ENCODE measurements at regions of chr3 and their contacts with region 1.

Region 1: DNA sequence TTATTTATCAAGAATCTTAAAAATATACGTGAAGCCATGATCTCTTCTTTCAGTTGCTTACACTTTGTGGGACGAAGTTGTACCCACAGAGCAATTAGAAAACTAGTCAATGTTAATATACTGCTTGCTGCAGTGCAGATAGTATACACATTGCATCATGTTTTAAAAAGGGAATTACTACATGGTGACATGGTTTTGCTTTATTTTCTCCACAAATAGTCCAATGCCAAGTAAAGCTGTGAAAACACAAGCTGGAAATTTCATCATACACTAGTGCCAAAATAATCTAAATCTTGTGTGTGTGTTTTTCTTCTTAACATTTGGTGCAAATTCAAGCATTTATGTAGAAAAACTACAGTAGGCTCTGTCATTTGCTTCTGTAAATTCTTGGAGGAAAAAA is 233.0 kb downstream of the EPHA3 start:
- DNase-seq: no peak
- H3K4me3 ChIP-seq: no peak overlapping the region
- H3K27ac ChIP-seq: no peak overlapping the region
- H3K4me1 ChIP-seq: no peaks in the 10 kb centered on the region
- H3K27me3 ChIP-seq: no peaks in the 10 kb centered on the region
- CTCF ChIP-seq: no peak

Region 2: GRCh38 chr3:88239870-88240269 is 1100.5 kb before region 1 on chr3:
- intact Hi-C with region 1: no loop called
- DNase-seq: no peak
- H3K4me3 ChIP-seq: no peak overlapping the region
- H3K27ac ChIP-seq: no peak overlapping the region
- H3K4me1 ChIP-seq: no peaks in the 10 kb centered on the region
- H3K27me3 ChIP-seq: no peaks in the 10 kb centered on the region
- CTCF ChIP-seq: no peak

Region 3: DNA sequence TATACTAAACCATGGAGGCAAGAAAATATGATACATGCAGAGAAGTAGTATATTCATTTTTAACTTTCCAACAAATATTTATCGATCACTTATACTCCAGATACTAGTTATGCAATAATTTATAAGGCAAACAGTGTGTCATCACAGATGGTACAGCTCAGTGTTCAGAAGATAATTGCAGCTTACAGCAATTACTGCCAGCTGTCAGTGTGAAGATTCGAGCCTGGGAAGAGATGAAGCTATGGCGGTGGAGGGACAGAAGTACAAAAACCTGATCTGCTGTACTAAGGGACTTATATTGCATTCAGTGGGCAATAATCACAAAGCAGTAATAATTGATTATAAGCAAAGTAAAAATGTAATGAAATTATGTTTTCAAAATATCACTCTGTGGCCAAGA is 403.6 kb before region 1 on chr3:
- intact Hi-C with region 1: no loop called
- DNase-seq: no peak
- H3K4me3 ChIP-seq: no peak overlapping the region
- H3K27ac ChIP-seq: no peak overlapping the region
- H3K4me1 ChIP-seq: no peaks in the 10 kb centered on the region
- H3K27me3 ChIP-seq: no peaks in the 10 kb centered on the region
- CTCF ChIP-seq: no peak

Region 4: DNA sequence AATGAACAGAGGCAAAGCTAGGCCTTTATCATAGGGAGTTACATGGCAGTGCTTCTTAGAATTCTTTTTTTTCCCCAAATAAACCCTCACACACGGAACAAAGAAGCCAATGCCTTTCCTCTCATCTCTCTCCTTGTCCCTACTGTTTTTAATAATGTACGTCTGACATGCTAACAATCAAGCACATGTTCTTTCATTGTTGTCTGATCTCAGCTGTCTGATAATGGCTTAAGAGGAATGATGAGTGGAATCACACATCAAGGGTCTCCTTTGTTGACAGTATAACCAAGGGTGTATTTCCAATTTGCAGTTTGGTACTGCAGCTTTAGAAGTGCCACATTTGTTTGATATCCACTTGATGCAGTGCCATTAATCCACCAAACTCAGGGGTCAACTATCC is 267.8 kb before region 1 on chr3:
- intact Hi-C with region 1: no loop called
- DNase-seq: no peak
- H3K4me3 ChIP-seq: no peak overlapping the region
- H3K27ac ChIP-seq: no peak overlapping the region
- H3K4me1 ChIP-seq: no peaks in the 10 kb centered on the region
- H3K27me3 ChIP-seq: no peaks in the 10 kb centered on the region
- CTCF ChIP-seq: no peak

Region 5: DNA sequence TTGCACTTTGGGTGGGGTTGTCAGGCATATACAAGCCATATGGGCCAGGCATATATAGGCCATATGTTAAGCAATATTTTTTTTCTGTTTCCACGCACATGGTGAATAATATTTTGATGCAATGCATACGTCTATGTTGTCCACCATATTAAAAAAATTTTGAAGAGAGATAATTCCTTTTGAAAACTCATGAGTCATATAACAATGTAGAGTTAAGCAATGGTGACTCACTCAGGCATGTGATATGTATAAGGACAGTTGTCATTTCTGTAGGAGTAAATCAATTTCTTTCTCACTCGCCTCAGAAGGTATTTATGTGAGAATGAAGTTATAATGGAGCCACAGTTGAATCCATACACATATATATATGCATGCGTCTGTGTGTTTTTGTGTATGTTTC is 39.6 kb after region 1 on chr3:
- intact Hi-C with region 1: loop called (anchors 5 kb)
- DNase-seq: no peak
- H3K4me3 ChIP-seq: no peak overlapping the region
- H3K27ac ChIP-seq: no peak overlapping the region
- H3K4me1 ChIP-seq: no peaks in the 10 kb centered on the region
- H3K27me3 ChIP-seq: no peaks in the 10 kb centered on the region
- CTCF ChIP-seq: no peak

Measured in colonic mucosa (tissue), 4 donors.